Thyroid gland (tissue), 4 donors: ENCODE measurements at regions of chr12 and their contacts with region 1.

Region 1: DNA sequence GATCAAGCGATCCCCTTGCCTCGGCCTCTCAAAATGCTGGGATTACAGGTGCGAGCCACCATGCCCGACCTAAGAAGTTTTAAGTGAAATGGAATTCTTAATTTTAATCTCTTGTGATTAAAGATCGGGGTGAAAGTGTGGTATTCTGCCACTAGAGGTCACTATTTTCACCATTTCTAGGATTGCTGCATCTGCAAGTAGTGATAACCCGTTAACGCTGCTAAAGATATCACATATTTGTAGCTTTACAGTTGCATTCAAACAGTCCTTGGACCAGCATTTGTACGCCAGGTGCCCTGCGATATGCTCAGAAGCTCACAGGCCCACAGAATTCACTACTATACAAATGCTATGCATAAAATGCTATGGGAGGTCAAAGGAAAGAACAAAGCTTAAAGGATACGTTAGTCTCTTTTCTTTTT is 19.3 kb downstream of the CCDC62 start:
- DNase-seq: no peak
- H3K4me3 ChIP-seq: no peak overlapping the region
- H3K27ac ChIP-seq: no peak overlapping the region
- H3K4me1 ChIP-seq: peaks cover 0 to 6% of the 10 kb centered on the region in 2 donors
- H3K27me3 ChIP-seq: no peaks in the 10 kb centered on the region
- CTCF ChIP-seq: peak; percentile 46 to 66 (median 60)
- POLR2A ChIP-seq: no peak

Region 2: GRCh38 chr12:122856999-122857671 is 63.4 kb after region 1 on chr12:
- intact Hi-C with region 1: loop called (anchors 5 kb)
- DNase-seq: no peak
- H3K4me3 ChIP-seq: no peak overlapping the region
- H3K27ac ChIP-seq: no peak overlapping the region
- H3K4me1 ChIP-seq: peaks cover 23 to 40% of the 10 kb centered on the region in 2 donors
- H3K27me3 ChIP-seq: no peaks in the 10 kb centered on the region
- CTCF ChIP-seq: no peak
- POLR2A ChIP-seq: no peak